ENCODE measurements at regions of chr16 and their contacts with region 1.

Region 1: GRCh38 chr16:81737885-81738786 is 41.0 kb upstream of the PLCG2 start:
- DNase-seq: peak; percentile 91 to 93
- H3K4me3 ChIP-seq: no peak overlapping the region
- H3K4me3 Mint-ChIP-seq: no peak overlapping the region
- H3K27ac Mint-ChIP-seq: no peak overlapping the region
- H3K4me1 ChIP-seq: peaks cover 10% of the 10 kb centered on the region; the same call in 1 of the 2 replicates
- H3K4me1 Mint-ChIP-seq: no peaks in the 10 kb centered on the region
- H3K27me3 ChIP-seq: no peaks in the 10 kb centered on the region
- H3K27me3 Mint-ChIP-seq: no peaks in the 10 kb centered on the region
- CTCF ChIP-seq: peak; percentile 87 to 92

Region 2: DNA sequence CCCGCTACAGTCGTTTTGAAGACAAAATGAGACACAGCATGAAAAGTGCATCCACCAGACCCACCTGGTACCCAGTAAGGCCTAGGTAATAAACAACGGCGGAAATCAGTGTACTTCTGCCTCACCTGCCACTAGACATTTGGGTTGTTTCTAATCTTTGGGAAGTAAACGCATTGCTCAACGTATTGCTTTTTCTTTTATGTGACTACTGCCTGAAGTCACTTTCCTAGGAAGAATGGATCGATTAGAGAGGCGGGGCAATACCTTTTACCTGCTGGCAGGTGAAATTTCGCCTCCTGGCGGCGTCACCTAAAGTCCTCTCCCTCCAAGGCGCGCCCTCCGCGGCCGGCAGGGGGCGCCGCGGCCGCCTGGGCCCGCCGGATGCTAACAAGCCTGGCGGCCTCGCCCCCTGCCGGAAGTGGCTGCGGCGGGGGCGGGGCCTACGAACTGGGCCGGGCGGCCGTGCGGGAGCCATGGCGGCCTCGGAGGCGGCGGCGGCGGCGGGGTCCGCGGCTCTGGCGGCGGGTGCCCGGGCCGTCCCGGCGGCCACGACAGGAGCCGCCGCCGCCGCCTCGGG is 702.6 kb before region 1 on chr16 and contains the start of gene ATMIN:
- CTCF ChIA-PET with region 1: no interaction called
- POLR2A ChIA-PET with region 1: no interaction called
- intact Hi-C with region 1: loop called (anchors 1 kb)
- DNase-seq: peak; percentile 85 to 95
- H3K4me3 ChIP-seq: peak within 1 kb of the TSS; percentile 69
- H3K4me3 Mint-ChIP-seq: peak within 1 kb of the TSS; percentile 84
- H3K27ac Mint-ChIP-seq: peak within 1 kb of the TSS; percentile 68
- H3K4me1 ChIP-seq: peaks cover 10% of the 10 kb centered on the region; the same call in 1 of the 2 replicates
- H3K4me1 Mint-ChIP-seq: no peaks in the 10 kb centered on the region
- H3K27me3 ChIP-seq: no peaks in the 10 kb centered on the region
- H3K27me3 Mint-ChIP-seq: no peaks in the 10 kb centered on the region
- CTCF ChIP-seq: peak; percentile 96 to 99
- total RNA-seq, gene ATMIN: 53.0 and 54.5 TPM in 2 replicates

Region 3: GRCh38 chr16:81366316-81366932 is 371.7 kb before region 1 on chr16:
- CTCF ChIA-PET with region 1: interaction called, 4 read pairs
- POLR2A ChIA-PET with region 1: no interaction called
- intact Hi-C with region 1: loop called (anchors 1 kb)
- DNase-seq: peak in 1 of 2 experiments; percentile 56
- H3K4me3 ChIP-seq: no peak overlapping the region
- H3K4me3 Mint-ChIP-seq: no peak overlapping the region
- H3K27ac Mint-ChIP-seq: no peak overlapping the region
- H3K4me1 ChIP-seq: no peaks in the 10 kb centered on the region
- H3K4me1 Mint-ChIP-seq: no peaks in the 10 kb centered on the region
- H3K27me3 ChIP-seq: no peaks in the 10 kb centered on the region
- H3K27me3 Mint-ChIP-seq: no peaks in the 10 kb centered on the region
- CTCF ChIP-seq: peak; percentile 64 to 83

Region 4: GRCh38 chr16:81623363-81624102 is 114.6 kb before region 1 on chr16:
- CTCF ChIA-PET with region 1: interaction called, 5 read pairs
- POLR2A ChIA-PET with region 1: no interaction called
- intact Hi-C with region 1: loop called (anchors 1 kb)
- DNase-seq: peak in 1 of 2 experiments; percentile 54
- H3K4me3 ChIP-seq: no peak overlapping the region
- H3K4me3 Mint-ChIP-seq: no peak overlapping the region
- H3K27ac Mint-ChIP-seq: no peak overlapping the region
- H3K4me1 ChIP-seq: no peaks in the 10 kb centered on the region
- H3K4me1 Mint-ChIP-seq: no peaks in the 10 kb centered on the region
- H3K27me3 ChIP-seq: no peaks in the 10 kb centered on the region
- H3K27me3 Mint-ChIP-seq: no peaks in the 10 kb centered on the region
- CTCF ChIP-seq: peak; percentile 57 to 64

Measured in Caco-2 (cell line).